Esophagus muscularis mucosa (tissue), 4 donors: ENCODE measurements at regions of chr12 and their contacts with region 1.

Region 1: DNA sequence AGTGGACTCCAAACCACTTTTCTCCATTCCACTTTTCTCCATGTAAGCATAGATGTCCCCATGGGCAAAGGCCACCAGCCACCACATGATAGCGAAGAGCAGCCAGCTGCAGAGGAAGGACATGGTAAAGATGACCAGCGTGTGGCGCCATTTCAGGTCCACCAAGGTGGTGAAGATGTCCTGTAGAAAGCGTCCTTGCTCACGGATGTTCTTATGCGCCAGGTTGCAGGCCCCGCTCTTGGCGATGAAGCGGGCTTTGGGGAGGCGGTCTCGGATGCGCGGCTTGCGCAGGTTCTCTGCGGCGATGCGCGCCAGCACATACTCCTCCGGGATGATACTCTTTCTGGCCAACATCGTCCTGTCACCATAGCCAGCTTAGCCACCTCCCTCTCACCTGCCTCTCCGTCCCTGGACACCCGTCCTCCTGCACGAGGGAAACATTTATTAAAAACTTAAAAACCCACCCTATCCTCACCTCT is 1.2 kb downstream of the KCNJ8 start:
- DNase-seq: no peak
- H3K4me3 ChIP-seq: peak overlapping the region; percentile 57 to 73 (median 68)
- H3K27ac ChIP-seq: peak overlapping the region; percentile 87 to 92 (median 88)
- H3K4me1 ChIP-seq: peaks cover 13 to 48% (median 38%) of the 10 kb centered on the region in 4 donors
- H3K27me3 ChIP-seq: no peaks in the 10 kb centered on the region
- CTCF ChIP-seq: peak; percentile 43 to 50 (median 50)
- EP300 ChIP-seq: no peak
- POLR2A ChIP-seq: no peak

Region 2: DNA sequence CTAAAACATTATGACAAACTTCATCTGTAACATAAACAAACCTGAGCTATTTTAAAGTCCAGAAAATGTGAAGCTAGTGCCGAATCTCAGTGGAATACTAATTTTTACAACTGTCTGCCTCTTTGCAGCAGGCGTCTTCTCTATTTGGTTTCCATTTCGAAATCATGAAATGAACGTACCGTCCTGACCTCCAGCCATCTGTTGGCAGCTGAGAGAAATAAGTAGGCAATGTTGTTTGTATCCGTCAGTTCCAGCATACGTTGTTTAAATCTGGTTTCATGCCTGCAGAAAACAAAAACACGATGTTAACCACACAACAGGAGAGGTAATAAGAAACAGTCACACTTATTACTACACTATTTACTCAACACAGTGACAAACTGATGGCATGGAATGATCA is 55.5 kb after region 1 on chr12:
- intact Hi-C with region 1: loop called (anchors 5 kb)
- DNase-seq: no peak
- H3K4me3 ChIP-seq: peak overlapping the region in 2 of 4 donors; percentile 14 to 25
- H3K27ac ChIP-seq: peak overlapping the region; percentile 77 to 79 (median 78)
- H3K4me1 ChIP-seq: peaks cover 21 to 70% (median 61%) of the 10 kb centered on the region in 4 donors
- H3K27me3 ChIP-seq: no peaks in the 10 kb centered on the region
- CTCF ChIP-seq: no peak
- EP300 ChIP-seq: peak; percentile 81
- POLR2A ChIP-seq: no peak

Region 3: DNA sequence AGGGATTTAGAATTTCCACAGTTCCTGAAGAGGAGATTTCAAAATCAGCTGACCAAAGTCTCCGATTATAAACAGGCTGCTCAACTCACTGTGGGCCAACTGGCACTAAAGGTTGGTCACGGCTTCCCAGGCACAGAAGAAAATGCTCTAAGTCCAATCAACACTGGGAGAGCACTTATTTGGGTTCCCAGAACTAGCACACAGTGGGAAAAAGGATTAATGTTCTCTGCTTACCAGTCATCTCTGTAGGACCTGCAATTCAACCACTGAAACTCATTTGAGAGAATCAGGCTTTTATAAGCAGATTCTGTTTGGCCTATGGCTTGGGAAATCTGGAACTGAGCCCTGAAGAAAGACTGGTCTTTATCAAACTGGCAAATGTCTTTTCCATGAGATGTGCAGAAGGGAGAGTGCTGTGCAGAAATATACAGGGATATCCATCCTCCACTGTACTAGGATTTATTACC is 118.5 kb after region 1 on chr12:
- intact Hi-C with region 1: loop called (anchors 5 kb)
- DNase-seq: no peak
- H3K4me3 ChIP-seq: peak overlapping the region in 1 of 4 donors; percentile 9
- H3K27ac ChIP-seq: peak overlapping the region; percentile 71 to 80 (median 76)
- H3K4me1 ChIP-seq: peaks cover 23 to 61% (median 59%) of the 10 kb centered on the region in 4 donors
- H3K27me3 ChIP-seq: no peaks in the 10 kb centered on the region
- CTCF ChIP-seq: no peak
- EP300 ChIP-seq: no peak
- POLR2A ChIP-seq: no peak